Caco-2 (cell line): ENCODE measurements at regions of chr2 and their contacts with region 1.

Region 1: DNA sequence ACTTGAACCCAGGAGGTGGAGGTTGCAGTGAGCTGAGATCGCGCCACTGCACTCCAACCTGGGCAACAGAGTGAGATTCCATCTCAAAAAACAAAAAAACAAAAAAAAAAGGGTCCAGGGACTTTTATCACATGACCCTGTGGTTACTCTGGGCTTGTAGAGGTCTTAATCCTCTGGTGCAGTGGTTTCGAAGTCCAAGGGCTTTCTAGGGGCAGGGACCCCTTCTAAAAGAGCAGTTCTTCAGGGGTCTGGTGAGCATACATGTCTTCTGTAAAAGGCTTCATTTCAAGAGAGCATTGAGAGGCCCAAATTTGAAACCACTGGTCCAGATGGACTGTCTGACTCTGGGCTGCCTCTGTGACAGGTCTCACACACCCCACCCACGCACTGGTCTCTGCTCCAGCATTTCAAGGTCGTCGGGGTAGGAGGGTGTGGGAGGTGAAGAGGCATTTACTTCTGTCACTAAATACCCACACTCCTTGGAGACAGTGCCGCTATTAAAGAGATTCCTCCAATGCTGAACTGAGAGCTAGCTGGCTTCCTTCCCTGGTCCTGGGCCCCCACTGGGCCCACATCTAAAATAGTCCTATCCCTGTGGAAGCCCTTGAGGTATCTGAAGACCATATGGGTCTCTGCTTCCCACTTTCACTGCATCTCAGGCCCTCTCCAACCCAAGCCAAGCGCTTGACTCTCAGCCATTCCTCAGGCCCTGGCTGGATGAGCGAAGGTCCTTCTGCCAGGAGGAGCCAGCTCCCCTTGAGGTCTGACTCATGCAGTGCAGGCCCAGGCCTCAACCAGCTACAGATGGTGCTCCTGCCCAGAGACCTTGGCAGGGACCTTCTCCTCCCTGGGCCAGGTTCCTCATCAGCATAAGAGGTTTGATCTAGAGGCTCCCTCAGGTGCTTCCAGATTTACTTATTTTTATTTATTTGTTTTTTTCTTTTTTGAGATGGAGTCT is 44.8 kb downstream of the PAX8 start:
- DNase-seq: peak; percentile 45 to 68
- H3K4me3 ChIP-seq: no peak overlapping the region
- H3K4me3 Mint-ChIP-seq: peak overlapping the region; percentile 95
- H3K27ac Mint-ChIP-seq: peak overlapping the region; percentile 97
- H3K4me1 ChIP-seq: peaks cover 76% of the 10 kb centered on the region
- H3K4me1 Mint-ChIP-seq: peaks cover 54% of the 10 kb centered on the region
- H3K27me3 ChIP-seq: no peaks in the 10 kb centered on the region
- H3K27me3 Mint-ChIP-seq: no peaks in the 10 kb centered on the region
- CTCF ChIP-seq: peak; percentile 40 to 42

Region 2: GRCh38 chr2:113144259-113144658 is 89.6 kb before region 1 on chr2:
- CTCF ChIA-PET with region 1: no interaction called
- POLR2A ChIA-PET with region 1: no interaction called
- intact Hi-C with region 1: no loop called
- DNase-seq: no peak
- H3K4me3 ChIP-seq: no peak overlapping the region
- H3K4me3 Mint-ChIP-seq: no peak overlapping the region
- H3K27ac Mint-ChIP-seq: no peak overlapping the region
- H3K4me1 ChIP-seq: peaks cover 5% of the 10 kb centered on the region
- H3K4me1 Mint-ChIP-seq: peaks cover 6% of the 10 kb centered on the region
- H3K27me3 ChIP-seq: no peaks in the 10 kb centered on the region
- H3K27me3 Mint-ChIP-seq: no peaks in the 10 kb centered on the region
- CTCF ChIP-seq: no peak

Region 3: DNA sequence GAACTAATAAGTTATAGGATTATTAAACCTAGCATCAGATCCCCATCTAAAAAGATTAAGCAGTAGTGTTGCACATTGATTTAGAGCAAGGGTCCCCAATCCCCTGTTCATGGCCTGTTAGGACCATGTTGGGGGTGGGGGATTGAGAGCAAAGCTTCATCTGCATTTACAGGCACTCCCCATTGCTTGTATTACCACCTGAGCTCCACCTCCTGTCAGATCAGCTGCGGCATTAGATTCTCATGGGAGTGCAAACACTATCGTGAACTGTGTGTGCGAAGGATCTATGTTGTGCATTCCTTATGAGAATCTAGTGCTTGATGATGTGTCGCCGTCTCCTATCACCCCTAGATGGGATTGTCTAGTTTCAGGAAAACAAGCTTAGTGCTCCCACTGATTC is 78.5 kb before region 1 on chr2:
- CTCF ChIA-PET with region 1: no interaction called
- POLR2A ChIA-PET with region 1: no interaction called
- intact Hi-C with region 1: no loop called
- DNase-seq: no peak
- H3K4me3 ChIP-seq: no peak overlapping the region
- H3K4me3 Mint-ChIP-seq: no peak overlapping the region
- H3K27ac Mint-ChIP-seq: no peak overlapping the region
- H3K4me1 ChIP-seq: peaks cover 22% of the 10 kb centered on the region
- H3K4me1 Mint-ChIP-seq: peaks cover 5% of the 10 kb centered on the region
- H3K27me3 ChIP-seq: no peaks in the 10 kb centered on the region
- H3K27me3 Mint-ChIP-seq: no peaks in the 10 kb centered on the region
- CTCF ChIP-seq: no peak

Region 4: GRCh38 chr2:113211226-113212105 is 22.4 kb before region 1 on chr2:
- CTCF ChIA-PET with region 1: interaction called, 9 read pairs
- POLR2A ChIA-PET with region 1: interaction called, 22 read pairs
- intact Hi-C with region 1: no loop called
- DNase-seq: peak; percentile 69 to 71
- H3K4me3 ChIP-seq: no peak overlapping the region
- H3K4me3 Mint-ChIP-seq: peak overlapping the region; percentile 0
- H3K27ac Mint-ChIP-seq: peak overlapping the region; percentile 68
- H3K4me1 ChIP-seq: peaks cover 27% of the 10 kb centered on the region
- H3K4me1 Mint-ChIP-seq: peaks cover 67% of the 10 kb centered on the region
- H3K27me3 ChIP-seq: no peaks in the 10 kb centered on the region
- H3K27me3 Mint-ChIP-seq: no peaks in the 10 kb centered on the region
- CTCF ChIP-seq: no peak

Region 5: GRCh38 chr2:113219889-113220641 is 13.8 kb before region 1 on chr2:
- CTCF ChIA-PET with region 1: interaction called, 4 read pairs
- POLR2A ChIA-PET with region 1: interaction called, 12 read pairs
- intact Hi-C with region 1: loop called (anchors 1 kb)
- DNase-seq: no peak
- H3K4me3 ChIP-seq: no peak overlapping the region
- H3K4me3 Mint-ChIP-seq: no peak overlapping the region
- H3K27ac Mint-ChIP-seq: peak overlapping the region; percentile 98
- H3K4me1 ChIP-seq: peaks cover 54% of the 10 kb centered on the region
- H3K4me1 Mint-ChIP-seq: peaks cover 31% of the 10 kb centered on the region
- H3K27me3 ChIP-seq: no peaks in the 10 kb centered on the region
- H3K27me3 Mint-ChIP-seq: no peaks in the 10 kb centered on the region
- CTCF ChIP-seq: no peak